Common myeloid progenitor, CD34-positive (primary cell): ENCODE measurements at regions of chr11 and their contacts with region 1.

Region 1: DNA sequence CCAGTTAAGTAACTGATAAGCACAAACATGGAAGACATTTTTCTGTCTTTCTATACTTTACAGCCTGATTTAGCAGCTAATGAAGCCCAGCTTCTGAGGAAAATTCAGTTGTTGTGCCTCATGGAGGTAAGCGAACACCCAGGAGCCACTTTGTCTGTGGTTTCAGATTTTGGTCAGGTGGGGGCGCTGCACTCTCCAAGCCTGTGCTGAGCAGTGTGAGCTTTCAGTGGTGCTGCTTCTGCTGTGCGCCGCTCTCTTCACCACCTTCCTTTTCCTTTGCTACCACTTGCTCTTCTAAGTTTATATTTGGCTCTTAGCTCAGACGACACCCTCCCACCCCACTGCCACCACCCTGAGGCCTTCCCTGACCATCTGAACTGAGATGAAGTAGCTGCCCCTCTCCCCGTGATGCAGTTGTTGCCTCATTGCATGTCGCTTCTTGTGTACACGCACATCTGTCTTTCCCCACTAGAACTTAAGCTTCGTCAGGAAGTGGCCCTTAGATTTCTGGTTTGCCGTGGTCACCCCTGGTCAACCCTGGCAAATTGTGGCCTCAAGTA is 14.0 kb downstream of the PSMD13 start:
- DNase-seq: peak; percentile 52 to 78 (median 69)
- H3K4me3 ChIP-seq: no peak overlapping the region
- H3K27ac ChIP-seq: peak overlapping the region in 1 of 2 experiments; percentile 27
- H3K4me1 ChIP-seq: no peaks in the 10 kb centered on the region
- H3K27me3 ChIP-seq: no peaks in the 10 kb centered on the region

Region 2: GRCh38 chr11:223884-224283 is 26.9 kb before region 1 on chr11:
- CTCF ChIA-PET with region 1: no interaction called
- POLR2A ChIA-PET with region 1: no interaction called
- DNase-seq: no peak
- H3K4me3 ChIP-seq: no peak overlapping the region
- H3K27ac ChIP-seq: no peak overlapping the region
- H3K4me1 ChIP-seq: peaks cover 0 to 2% (median 0%) of the 10 kb centered on the region in 4 experiments
- H3K27me3 ChIP-seq: no peaks in the 10 kb centered on the region

Region 3: DNA sequence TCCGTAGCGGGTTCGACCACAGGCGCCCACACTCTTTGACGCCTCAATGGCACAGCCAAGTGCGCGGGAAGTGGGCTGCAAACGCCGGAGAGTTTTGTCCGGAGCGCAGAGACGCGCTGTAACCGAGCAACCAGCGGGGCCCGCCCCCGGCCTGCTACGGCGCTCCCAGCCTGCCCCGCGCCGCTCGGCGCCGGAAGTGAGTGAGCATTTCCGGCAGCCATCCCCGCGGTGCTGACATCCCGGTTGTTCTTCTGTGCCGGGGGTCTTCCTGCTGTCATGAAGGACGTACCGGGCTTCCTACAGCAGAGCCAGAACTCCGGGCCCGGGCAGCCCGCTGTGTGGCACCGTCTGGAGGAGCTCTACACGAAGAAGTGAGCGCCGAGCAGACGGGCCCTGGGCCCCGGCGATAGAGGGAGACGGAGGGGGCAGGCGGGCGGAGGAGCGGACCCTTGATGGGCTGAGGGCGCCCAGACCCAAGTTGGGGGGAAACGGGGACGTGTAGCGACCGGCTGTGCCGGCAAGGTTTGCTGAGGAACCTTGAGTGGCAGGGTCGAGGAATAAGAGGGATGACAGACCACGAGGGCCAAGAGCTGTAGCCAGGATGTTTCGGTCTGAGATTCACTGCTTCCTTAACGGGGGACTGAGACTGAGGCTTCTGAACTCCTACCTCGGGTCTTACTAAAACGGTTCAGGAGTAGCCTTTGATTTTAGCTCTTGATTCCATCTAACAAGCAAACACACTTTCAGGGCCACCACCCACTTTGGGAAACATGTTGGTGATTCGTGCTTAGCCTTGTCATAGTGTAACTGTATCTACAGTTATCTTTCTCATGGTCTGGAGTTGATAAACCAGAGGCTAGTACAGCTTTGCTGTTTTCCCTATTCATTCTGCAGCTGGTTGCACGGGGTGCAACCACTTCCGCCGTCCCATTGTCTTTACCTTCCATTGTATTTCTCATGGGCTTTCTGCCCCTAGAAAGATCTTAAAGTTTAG is 13.7 kb before region 1 on chr11 and contains the start of gene PSMD13:
- CTCF ChIA-PET with region 1: interaction called, 61 read pairs
- POLR2A ChIA-PET with region 1: no interaction called
- DNase-seq: peak; percentile 89 to 91 (median 90)
- H3K4me3 ChIP-seq: peak within 1 kb of the TSS; percentile 88 to 99 (median 94)
- H3K27ac ChIP-seq: peak within 1 kb of the TSS; percentile 93 to 97
- H3K4me1 ChIP-seq: peaks cover 12 to 28% (median 19%) of the 10 kb centered on the region in 4 experiments
- H3K27me3 ChIP-seq: no peaks in the 10 kb centered on the region

Region 4: DNA sequence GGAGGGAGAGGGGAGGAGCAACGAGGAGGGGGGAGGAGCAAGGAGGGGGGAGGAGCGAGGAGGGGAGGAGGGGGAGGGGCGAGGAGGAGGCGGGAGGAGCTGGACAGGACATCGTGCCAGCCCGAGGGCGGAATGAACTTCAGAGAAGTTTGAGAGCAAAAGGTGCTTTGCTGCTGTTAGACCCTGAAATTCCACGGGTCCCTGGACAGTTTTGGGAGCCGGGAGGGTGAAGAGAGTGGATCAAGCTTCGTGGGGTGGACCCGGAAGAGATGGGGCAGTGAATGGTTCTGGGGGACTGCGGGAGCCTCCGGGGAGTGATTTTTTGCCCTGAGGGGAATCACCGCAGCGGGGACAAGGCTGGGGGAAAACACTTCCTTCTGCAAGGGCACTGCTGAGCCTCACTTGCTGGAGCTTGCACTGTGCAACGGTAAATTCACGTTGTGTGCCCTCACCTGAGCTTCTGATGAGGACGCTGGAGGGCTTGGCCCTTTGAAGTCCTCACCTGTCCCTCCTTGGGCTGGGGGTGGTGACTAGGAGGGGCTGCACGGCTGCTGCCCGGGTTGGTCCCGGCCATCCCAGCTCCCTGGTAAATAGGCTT is 16.8 kb after region 1 on chr11:
- CTCF ChIA-PET with region 1: interaction called, 31 read pairs
- POLR2A ChIA-PET with region 1: no interaction called
- DNase-seq: peak; percentile 56 to 75 (median 75)
- H3K4me3 ChIP-seq: peak overlapping the region; percentile 37 to 82 (median 62)
- H3K27ac ChIP-seq: peak overlapping the region in 1 of 2 experiments; percentile 93
- H3K4me1 ChIP-seq: peaks cover 4 to 35% (median 28%) of the 10 kb centered on the region in 4 experiments
- H3K27me3 ChIP-seq: no peaks in the 10 kb centered on the region

Region 5: GRCh38 chr11:279040-279965 is 28.5 kb after region 1 on chr11:
- CTCF ChIA-PET with region 1: interaction called, 10 read pairs
- POLR2A ChIA-PET with region 1: no interaction called
- DNase-seq: peak in 1 of 3 donors; percentile 50
- H3K4me3 ChIP-seq: peak overlapping the region in 3 of 7 experiments; percentile 39 to 60 (median 51)
- H3K27ac ChIP-seq: no peak overlapping the region
- H3K4me1 ChIP-seq: peaks cover 5 to 40% (median 30%) of the 10 kb centered on the region in 4 experiments
- H3K27me3 ChIP-seq: peaks cover 0 to 61% (median 19%) of the 10 kb centered on the region in 5 experiments

Region 6: DNA sequence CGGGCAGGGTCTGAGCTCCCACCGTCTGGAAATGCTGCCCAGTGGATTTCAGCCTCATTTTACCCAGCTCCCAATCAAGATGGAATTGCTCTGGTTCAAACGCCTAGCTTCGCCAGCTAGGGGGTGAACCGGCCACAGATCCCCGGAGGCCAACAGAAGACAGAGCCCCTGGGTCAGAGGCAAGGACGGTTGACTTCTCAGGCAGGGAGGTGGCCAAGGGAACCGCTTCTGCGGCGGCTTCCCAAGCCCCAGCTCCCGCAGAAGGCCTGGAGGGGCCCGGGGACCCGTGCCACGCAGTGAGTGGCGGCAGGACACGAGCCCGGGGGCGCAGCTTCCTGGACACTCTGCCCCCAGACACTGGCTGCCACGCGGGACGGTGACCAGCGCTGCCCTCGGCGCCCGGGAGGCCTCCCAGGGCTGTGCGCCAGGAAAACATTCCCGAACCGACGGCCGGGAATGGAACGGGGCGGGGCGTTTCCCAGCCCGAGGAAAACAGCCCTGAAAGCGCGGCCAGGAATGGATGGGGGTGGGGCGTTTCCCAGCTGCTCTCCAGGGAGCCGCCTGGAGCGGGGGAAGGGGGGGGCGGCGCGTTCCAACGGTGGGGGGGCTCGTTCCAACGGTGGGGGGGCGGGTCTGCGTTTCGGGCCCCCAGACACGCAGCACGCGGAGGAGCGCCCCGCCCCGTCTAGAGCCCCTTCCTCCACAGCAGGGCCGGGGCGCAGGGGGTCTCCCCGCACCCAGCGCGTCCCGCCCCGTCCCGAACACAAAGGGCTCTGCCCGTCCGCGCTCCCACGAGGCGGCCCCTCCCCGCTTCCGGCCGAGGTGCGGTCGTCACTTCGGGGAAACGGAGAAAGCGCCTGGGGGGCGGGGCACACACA is 105.0 kb after region 1 on chr11:
- CTCF ChIA-PET with region 1: interaction called, 17 read pairs
- POLR2A ChIA-PET with region 1: no interaction called
- DNase-seq: peak; percentile 87 to 92 (median 92)
- H3K4me3 ChIP-seq: peak overlapping the region in 3 of 7 experiments; percentile 43 to 49 (median 43)
- H3K27ac ChIP-seq: peak overlapping the region; percentile 33 to 86
- H3K4me1 ChIP-seq: peaks cover 4 to 42% (median 24%) of the 10 kb centered on the region in 4 experiments
- H3K27me3 ChIP-seq: no peaks in the 10 kb centered on the region